SK-N-SH (cell line): ENCODE measurements at regions of chr1 and their contacts with region 1.

Region 1: GRCh38 chr1:181189691-181190363 is 101.3 kb downstream of the IER5 start:
- DNase-seq: peak; percentile 92
- H3K4me3 ChIP-seq: peak overlapping the region; percentile 32 to 62
- H3K27ac ChIP-seq: no peak overlapping the region
- H3K4me1 ChIP-seq: no peaks in the 10 kb centered on the region; a peak in 1 of 4 replicates
- H3K27me3 ChIP-seq: peaks cover 6% of the 10 kb centered on the region; the same call in 1 of the 2 replicates
- CTCF ChIP-seq: peak; percentile 96
- EP300 ChIP-seq: no peak
- RAD21 ChIP-seq: peak; percentile 86

Region 2: GRCh38 chr1:181099152-181100014 is 90.4 kb before region 1 on chr1:
- CTCF ChIA-PET with region 1: no interaction called
- POLR2A ChIA-PET with region 1: no interaction called
- DNase-seq: no peak
- H3K4me3 ChIP-seq: peak overlapping the region; percentile 3 to 45; a peak in 3 of 4 replicates
- H3K27ac ChIP-seq: peak overlapping the region; percentile 98 to 99
- H3K4me1 ChIP-seq: peaks cover 93% of the 10 kb centered on the region in 2 experiments
- H3K27me3 ChIP-seq: no peaks in the 10 kb centered on the region
- CTCF ChIP-seq: no peak
- EP300 ChIP-seq: peak; percentile 7 to 83; a peak in 1 of 4 replicates
- RAD21 ChIP-seq: no peak

Region 3: GRCh38 chr1:181206513-181206912 is 16.7 kb after region 1 on chr1:
- CTCF ChIA-PET with region 1: interaction called, 38 read pairs
- POLR2A ChIA-PET with region 1: no interaction called
- DNase-seq: no peak
- H3K4me3 ChIP-seq: no peak overlapping the region
- H3K27ac ChIP-seq: no peak overlapping the region
- H3K4me1 ChIP-seq: no peaks in the 10 kb centered on the region
- H3K27me3 ChIP-seq: peaks cover 17% of the 10 kb centered on the region; the same call in 1 of the 2 replicates
- CTCF ChIP-seq: no peak
- EP300 ChIP-seq: no peak
- RAD21 ChIP-seq: no peak

Region 4: DNA sequence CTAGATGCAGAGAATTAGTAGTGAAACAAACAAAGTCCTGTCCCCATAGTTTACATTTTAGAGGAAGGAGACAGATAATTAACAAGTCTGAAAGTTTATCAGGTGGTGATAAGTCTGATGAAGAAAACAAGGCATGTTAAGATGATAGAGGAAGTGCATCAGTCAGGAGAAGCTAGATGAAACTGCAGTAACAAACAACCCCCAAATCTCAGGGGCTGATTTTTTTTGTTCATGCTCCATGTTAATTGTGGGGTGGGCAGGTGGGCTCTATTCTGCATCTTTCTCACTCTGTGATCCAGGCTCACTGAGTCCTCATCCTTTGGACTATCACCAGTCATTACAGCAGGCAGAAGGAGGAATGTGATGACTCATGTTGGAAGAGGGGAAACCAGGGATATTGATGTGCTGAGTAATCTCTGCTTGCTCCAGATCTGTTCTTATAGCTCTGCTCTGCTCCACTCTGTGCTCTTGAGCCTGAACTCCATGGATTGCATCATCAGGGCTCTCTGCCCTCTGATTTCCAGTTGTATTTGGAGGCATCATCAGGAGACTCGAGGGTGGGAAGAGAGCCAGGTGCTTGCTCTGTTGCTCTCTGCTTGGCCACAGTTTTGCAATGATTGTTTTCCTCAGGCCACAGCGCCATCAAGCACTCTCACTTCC is 65.6 kb after region 1 on chr1:
- CTCF ChIA-PET with region 1: no interaction called
- POLR2A ChIA-PET with region 1: no interaction called
- DNase-seq: no peak
- H3K4me3 ChIP-seq: no peak overlapping the region
- H3K27ac ChIP-seq: no peak overlapping the region
- H3K4me1 ChIP-seq: 0 out of 4 replicates have a peak, but pooled peaks cover 0 to 3% of the 10 kb centered on the region in 2 experiments
- H3K27me3 ChIP-seq: no peaks in the 10 kb centered on the region; the same call in 1 of the 2 replicates
- CTCF ChIP-seq: no peak
- EP300 ChIP-seq: no peak
- RAD21 ChIP-seq: no peak

Region 5: GRCh38 chr1:181406989-181407388 is 217.2 kb after region 1 on chr1:
- CTCF ChIA-PET with region 1: interaction called, 10 read pairs
- POLR2A ChIA-PET with region 1: no interaction called
- DNase-seq: no peak
- H3K4me3 ChIP-seq: no peak overlapping the region
- H3K27ac ChIP-seq: no peak overlapping the region
- H3K4me1 ChIP-seq: no peaks in the 10 kb centered on the region
- H3K27me3 ChIP-seq: no peaks in the 10 kb centered on the region
- CTCF ChIP-seq: no peak
- EP300 ChIP-seq: no peak
- RAD21 ChIP-seq: no peak

Region 6: DNA sequence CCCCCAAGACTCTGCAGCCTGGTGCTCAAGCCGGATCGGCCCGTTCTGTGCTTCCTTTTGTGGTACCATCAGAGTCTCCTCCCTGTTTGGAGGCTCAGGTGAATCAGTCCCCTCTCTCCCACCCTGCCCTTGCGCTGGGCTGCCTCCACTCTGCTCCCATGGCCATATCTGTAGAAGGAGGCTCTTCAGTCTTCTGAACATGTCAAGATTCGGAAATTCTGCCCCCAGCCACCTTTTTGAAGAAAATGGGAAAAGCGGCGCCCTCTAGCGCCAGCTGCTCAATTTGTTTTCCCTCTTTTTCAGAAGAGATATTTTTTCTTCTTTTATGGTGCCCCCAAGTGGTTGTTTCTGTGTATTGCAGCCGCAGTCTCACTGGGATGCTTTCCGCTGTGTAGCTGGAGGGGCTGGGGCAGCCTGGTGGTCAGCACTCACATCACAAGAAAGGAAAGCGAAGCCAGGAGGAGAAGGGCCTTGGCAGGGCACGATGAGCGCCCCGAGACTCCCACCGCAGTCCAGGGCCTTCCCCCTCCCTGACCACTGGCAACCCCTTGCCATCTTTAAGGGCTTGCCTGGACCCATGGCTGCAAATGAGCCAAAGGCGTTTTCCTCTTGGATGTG is 235.1 kb after region 1 on chr1:
- CTCF ChIA-PET with region 1: interaction called, 134 read pairs
- POLR2A ChIA-PET with region 1: no interaction called
- DNase-seq: peak; percentile 79
- H3K4me3 ChIP-seq: peak overlapping the region; percentile 23 to 54
- H3K27ac ChIP-seq: no peak overlapping the region
- H3K4me1 ChIP-seq: peaks cover 0 to 5% of the 10 kb centered on the region in 2 experiments; a peak in 1 of 4 replicates
- H3K27me3 ChIP-seq: no peaks in the 10 kb centered on the region
- CTCF ChIP-seq: peak; percentile 99
- EP300 ChIP-seq: no peak
- RAD21 ChIP-seq: peak; percentile 86